Activated CD4-positive, alpha-beta T cell treated with anti-CD3 and anti-CD28 coated beads for 36 hours (primary cell): ENCODE measurements at regions of chr9 and their contacts with region 1.

Region 1: GRCh38 chr9:129584136-129584535 is 36.8 kb downstream of the C9orf50 start:
- DNase-seq: peak; percentile 76
- ATAC-seq: peak; percentile 75
- H3K4me3 Mint-ChIP-seq: no peak overlapping the region
- H3K27ac Mint-ChIP-seq: peak overlapping the region; percentile 53
- H3K4me1 Mint-ChIP-seq: peaks cover 53% of the 10 kb centered on the region
- H3K27me3 Mint-ChIP-seq: no peaks in the 10 kb centered on the region

Region 2: DNA sequence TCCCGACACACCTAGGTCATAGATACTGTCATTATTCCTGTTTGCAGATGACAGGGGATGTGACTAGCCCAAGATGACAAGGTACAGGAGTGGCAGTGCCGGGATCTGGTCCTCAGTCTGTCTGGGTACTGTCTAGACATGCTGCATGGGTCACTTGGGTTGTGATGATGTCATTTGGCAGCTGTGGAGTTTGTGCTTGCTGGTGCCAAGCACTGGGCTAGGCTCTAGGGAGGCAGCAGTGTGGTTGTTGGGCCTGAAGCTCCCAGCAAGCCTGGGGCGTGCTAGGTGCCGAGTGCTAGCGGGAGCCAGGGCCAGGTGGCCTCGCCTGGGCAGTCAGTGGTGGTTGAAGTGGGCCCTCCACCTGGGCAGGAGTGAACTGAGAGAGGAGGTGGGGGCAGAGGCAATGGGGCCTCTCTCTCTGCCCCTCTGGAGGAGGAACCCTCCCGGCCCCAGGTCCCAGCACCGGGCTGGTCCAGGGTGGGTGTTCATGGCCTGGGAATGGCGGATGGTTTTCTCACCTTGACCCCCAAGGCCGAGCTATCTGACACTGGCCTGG is 66.6 kb after region 1 on chr9:
- CTCF ChIA-PET with region 1: no interaction called
- POLR2A ChIA-PET with region 1: no interaction called
- intact Hi-C with region 1: no loop called
- DNase-seq: no peak
- ATAC-seq: no peak
- H3K4me3 Mint-ChIP-seq: no peak overlapping the region
- H3K27ac Mint-ChIP-seq: no peak overlapping the region
- H3K4me1 Mint-ChIP-seq: no peaks in the 10 kb centered on the region
- H3K27me3 Mint-ChIP-seq: no peaks in the 10 kb centered on the region

Region 3: DNA sequence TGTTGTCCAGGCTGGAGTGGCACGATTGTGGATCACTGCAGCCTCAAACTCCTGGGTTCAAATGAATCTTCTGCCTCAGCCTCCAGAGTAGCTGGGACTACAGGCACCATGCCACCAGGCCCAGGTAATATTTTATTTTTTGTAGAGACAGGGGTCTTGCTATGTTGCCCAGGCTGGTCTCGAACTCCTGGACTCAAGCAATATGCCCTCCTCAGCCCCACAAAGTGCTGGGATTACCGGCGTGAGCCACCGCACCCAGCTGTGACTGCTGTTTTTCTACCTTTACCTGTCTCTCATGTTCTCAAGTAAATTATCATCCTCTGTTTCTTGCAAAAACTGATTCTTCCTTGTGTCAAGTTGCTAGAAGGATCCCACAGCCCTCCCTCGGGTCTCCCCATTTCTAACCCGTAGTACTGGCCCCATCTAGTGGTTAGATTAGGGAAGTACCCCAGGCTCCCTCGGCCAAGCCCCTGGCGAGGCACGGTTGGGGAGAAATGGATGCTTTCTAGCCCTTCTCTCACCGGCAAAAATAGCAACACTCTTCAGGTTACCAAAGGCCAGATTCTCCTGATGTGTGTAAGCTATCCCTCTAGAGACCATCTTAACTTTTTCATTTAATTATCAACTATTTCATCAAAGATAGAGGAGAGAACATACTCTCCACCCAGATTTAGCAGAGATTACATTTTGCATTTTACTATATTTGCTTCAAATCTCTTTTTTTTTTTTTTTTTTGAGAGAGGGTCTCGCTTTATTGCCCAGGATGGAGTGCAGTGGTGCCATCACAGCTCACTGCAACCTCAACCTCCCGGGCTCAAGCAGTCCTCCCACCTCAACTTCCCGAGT is 199.6 kb after region 1 on chr9:
- CTCF ChIA-PET with region 1: no interaction called
- POLR2A ChIA-PET with region 1: no interaction called
- intact Hi-C with region 1: no loop called
- DNase-seq: peak; percentile 84
- ATAC-seq: peak; percentile 100
- H3K4me3 Mint-ChIP-seq: no peak overlapping the region
- H3K27ac Mint-ChIP-seq: peak overlapping the region; percentile 11
- H3K4me1 Mint-ChIP-seq: peaks cover 4% of the 10 kb centered on the region
- H3K27me3 Mint-ChIP-seq: peaks cover 2% of the 10 kb centered on the region

Region 4: GRCh38 chr9:129954868-129955550 is 370.9 kb after region 1 on chr9:
- CTCF ChIA-PET with region 1: no interaction called
- POLR2A ChIA-PET with region 1: interaction called, 10 read pairs
- intact Hi-C with region 1: no loop called
- DNase-seq: no peak
- ATAC-seq: no peak
- H3K4me3 Mint-ChIP-seq: no peak overlapping the region
- H3K27ac Mint-ChIP-seq: peak overlapping the region; percentile 66
- H3K4me1 Mint-ChIP-seq: peaks cover 61% of the 10 kb centered on the region
- H3K27me3 Mint-ChIP-seq: no peaks in the 10 kb centered on the region